ENCODE measurements at regions of chr12 and their contacts with region 1.

Region 1: GRCh38 chr12:65602610-65603295 is 221.5 kb upstream of the HMGA2 start:
- DNase-seq: peak; percentile 68
- H3K4me3 ChIP-seq: peak overlapping the region; percentile 56
- CTCF ChIP-seq: peak; percentile 75

Region 2: DNA sequence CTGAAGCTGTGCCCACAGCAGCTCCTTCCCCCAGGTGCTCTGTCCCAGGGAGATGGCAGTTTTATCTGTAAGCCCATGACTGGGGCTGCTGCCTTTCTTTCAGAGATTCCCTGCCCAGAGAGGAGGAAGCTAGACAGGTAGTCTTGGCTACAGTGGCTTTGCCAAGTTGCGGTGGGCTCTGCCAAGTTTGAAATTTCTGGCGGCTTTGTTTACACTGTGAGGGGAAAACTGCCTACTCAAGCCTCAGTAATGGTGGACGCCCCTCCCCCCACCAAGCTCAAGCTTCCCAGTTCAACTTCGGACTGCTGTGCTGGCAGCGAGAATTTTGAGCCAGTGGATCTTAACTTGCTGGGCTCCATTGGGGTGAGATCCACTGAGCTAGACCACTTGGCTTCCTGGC is 199.6 kb before region 1 on chr12:
- CTCF ChIA-PET with region 1: no interaction called
- POLR2A ChIA-PET with region 1: no interaction called
- DNase-seq: no peak
- H3K4me3 ChIP-seq: no peak overlapping the region
- CTCF ChIP-seq: no peak

Region 3: DNA sequence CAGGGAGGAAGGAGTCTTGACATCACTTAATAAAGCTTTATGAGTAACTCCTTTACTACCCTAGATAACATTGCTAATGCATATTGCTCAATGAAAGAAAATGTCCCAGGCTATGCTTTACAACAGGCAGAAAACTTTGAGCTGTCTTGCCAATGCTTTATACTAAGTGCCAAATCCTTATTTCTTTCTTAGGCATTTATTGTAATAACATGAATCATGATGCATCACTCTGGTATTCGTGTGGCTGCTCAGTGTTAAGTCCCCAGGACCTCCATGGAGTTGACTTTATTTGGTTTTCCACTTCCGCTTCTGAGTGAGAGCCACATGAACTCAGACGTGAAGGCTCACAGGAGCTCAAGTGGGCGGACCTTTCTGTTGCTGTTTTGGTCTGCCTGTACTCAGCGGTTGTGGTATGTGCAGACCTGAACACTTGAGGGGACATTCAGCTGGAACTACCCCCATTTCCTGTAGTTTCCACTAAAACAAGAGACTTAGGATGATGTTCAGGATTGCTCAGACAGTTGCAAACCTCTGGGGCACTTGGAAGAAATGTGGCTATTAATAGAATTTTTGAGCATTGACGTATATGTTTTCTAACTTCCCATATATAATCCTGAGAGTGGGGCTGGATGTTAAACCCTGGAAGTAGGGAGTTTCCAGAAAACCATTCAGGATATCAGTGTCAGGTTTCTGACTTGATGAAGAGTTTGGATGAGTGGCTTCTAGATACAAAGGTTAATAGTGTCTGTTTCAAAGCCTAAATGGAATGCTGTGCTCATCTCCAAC is 65.7 kb before region 1 on chr12:
- CTCF ChIA-PET with region 1: interaction called, 10 read pairs
- POLR2A ChIA-PET with region 1: interaction called, 9 read pairs
- DNase-seq: peak; percentile 100
- H3K4me3 ChIP-seq: no peak overlapping the region
- CTCF ChIP-seq: no peak

Region 4: GRCh38 chr12:65565601-65566560 is 36.9 kb before region 1 on chr12:
- CTCF ChIA-PET with region 1: interaction called, 20 read pairs
- POLR2A ChIA-PET with region 1: interaction called, 27 read pairs
- DNase-seq: peak; percentile 98
- H3K4me3 ChIP-seq: peak overlapping the region; percentile 6
- CTCF ChIP-seq: peak; percentile 19

Region 5: DNA sequence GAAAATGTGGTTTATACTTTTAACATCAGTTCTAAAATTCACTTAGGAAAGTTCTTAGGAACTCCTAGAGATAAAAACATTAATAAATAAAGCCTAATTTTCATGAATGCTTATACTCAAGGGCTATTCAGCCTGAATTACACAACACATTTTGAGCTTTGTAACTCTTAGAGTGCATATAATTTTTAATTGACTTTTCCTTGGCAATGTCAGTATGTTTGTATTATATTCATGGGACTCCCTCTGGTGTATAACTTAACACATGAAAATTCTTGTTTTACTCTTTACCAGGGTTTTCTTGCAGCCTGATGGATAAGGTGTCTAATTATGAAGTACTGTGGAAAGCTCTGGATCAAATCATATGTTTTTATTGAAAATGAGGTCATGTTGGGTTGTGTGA is 71.0 kb after region 1 on chr12:
- CTCF ChIA-PET with region 1: interaction called, 17 read pairs
- POLR2A ChIA-PET with region 1: interaction called, 5 read pairs
- DNase-seq: no peak
- H3K4me3 ChIP-seq: no peak overlapping the region
- CTCF ChIP-seq: no peak

Region 6: GRCh38 chr12:65878544-65878943 is 275.8 kb after region 1 on chr12:
- CTCF ChIA-PET with region 1: interaction called, 11 read pairs
- POLR2A ChIA-PET with region 1: no interaction called
- DNase-seq: no peak
- H3K4me3 ChIP-seq: no peak overlapping the region
- CTCF ChIP-seq: peak; percentile 35

Measured in AG04449 (cell line).